ENCODE measurements at regions of chr17 and their contacts with region 1.

Region 1: DNA sequence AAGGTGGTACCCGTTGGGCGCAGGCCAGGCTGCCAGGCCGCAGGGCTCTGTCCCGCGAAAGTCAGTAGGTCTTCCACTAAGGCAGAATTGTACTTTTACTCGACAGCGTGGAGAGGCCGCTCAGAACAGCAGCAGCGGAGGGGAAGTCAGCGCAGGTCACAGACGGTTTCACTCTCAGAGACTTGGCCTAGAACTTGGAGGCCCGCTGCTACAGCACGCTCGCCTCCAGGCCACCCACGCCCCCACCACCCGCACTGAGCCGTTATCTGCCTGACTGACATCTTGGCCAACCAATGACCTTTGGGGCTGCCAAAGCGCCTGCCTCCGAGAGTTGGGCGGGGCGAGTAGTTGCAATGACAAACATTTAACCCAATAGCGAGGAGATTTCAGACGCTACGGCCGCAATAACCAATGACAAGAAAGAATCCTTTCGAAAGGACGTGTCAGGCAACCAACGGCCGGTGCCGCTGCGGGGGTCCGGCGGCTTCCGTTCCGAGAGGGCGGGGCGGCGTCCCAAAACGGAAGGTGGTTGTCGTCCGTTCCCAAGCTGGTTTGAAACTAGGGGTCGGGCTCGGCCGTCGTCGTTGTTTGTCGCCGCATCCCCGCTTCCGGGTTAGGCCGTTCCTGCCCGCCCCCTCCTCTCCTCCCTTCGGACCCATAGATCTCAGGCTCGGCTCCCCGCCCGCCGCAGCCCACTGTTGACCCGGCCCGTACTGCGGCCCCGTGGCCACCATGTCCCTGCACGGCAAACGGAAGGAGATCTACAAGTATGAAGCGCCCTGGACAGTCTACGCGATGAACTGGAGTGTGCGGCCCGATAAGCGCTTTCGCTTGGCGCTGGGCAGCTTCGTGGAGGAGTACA is at the start of gene DCAF7:
- DNase-seq: peak; percentile 98 to 100 (median 100)
- H3K4me3 ChIP-seq: peak within 1 kb of the TSS; percentile 62 to 100 (median 97)
- H3K27ac ChIP-seq: peak within 1 kb of the TSS; percentile 63 to 96 (median 91)
- H3K27me3 ChIP-seq: no peaks in the 10 kb centered on the region
- CTCF ChIP-seq: peak in 20 of 56 donors; percentile 9 to 47 (median 26)
- total RNA-seq, gene DCAF7: 51.7 to 77.3 (median 64.0) TPM

Region 2: DNA sequence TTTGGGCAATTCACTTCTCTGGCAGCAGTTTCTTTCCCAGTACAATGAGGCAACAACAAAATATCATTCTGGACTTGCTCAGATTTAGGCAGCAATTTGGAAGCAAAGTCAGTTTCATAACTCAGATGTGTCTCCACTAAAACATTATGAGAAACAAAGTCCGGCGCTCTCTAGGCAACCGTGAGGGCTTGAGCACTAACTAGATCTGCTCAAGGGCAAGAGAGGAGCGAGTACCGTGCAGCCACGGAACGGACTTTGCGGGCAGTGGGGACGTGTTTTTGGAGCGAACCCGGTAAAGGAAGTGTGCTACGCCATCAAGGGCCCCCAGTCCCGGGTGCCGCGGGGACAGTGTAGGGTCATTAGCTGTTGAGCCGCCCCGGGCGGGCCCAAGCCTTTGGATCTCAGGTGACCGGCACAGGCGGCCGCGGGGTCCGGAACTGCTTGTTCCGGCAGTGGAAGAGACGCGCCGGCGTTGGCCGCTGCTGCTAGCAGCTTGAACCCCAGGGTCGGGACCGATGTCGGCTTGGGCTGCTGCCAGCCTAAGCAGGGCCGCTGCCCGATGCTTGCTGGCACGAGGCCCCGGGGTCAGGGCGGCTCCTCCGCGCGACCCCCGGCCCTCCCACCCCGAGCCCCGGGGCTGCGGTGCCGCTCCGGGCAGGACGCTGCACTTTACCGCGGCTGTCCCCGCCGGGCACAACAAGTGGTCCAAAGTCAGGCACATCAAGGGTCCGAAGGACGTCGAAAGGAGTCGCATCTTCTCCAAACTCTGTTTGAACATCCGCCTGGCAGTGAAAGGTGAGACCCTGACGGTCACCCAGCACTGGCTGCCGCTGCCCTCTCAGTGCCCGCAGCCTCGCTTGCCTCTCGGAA is 50.6 kb after region 1 on chr17 and contains the start of gene TACO1:
- intact Hi-C with region 1: loop called in 1 of 2 experiments (anchors 5 kb)
- DNase-seq: peak; percentile 62 to 91 (median 78)
- H3K4me3 ChIP-seq: peak within 1 kb of the TSS; percentile 52 to 100 (median 95)
- H3K27ac ChIP-seq: peak within 1 kb of the TSS in 56 of 59 donors; percentile 2 to 93 (median 78)
- H3K27me3 ChIP-seq: no peaks in the 10 kb centered on the region
- CTCF ChIP-seq: peak in 42 of 56 donors; percentile 8 to 57 (median 33)
- total RNA-seq, gene TACO1: 11.2 to 27.0 (median 20.5) TPM

Region 3: GRCh38 chr17:63827002-63827771 is 277.0 kb after region 1 on chr17 and contains the starts of genes FTSJ3 and PSMC5:
- intact Hi-C with region 1: loop called in 1 of 2 experiments (anchors 10 kb)
- DNase-seq: peak; percentile 96 to 98 (median 97)
- H3K4me3 ChIP-seq: peak within 1 kb of the TSS; percentile 67 to 99 (median 92)
- H3K27ac ChIP-seq: peak within 1 kb of the TSS; percentile 80 to 100 (median 98)
- H3K27me3 ChIP-seq: no peaks in the 10 kb centered on the region
- CTCF ChIP-seq: peak in 52 of 56 donors; percentile 16 to 62 (median 46)
- total RNA-seq, gene FTSJ3: 13.7 to 39.6 (median 25.0) TPM
- total RNA-seq, gene PSMC5: 89.5 to 186 (median 136) TPM

Measured in dorsolateral prefrontal cortex (tissue), 120 donors.